ENCODE measurements at regions of chr1 and their contacts with region 1.

Region 1: GRCh38 chr1:108559215-108560186 is at the start of gene EEIG2:
- DNase-seq: peak; percentile 59
- H3K4me3 ChIP-seq: peak within 1 kb of the TSS; percentile 77
- H3K27ac ChIP-seq: no peak within 1 kb of the TSS
- H3K27me3 ChIP-seq: peaks cover 2% of the 10 kb centered on the region
- CTCF ChIP-seq: peak; percentile 55
- polyA plus RNA-seq, gene EEIG2: 4.4 and 6.1 TPM in 2 replicates

Region 2: GRCh38 chr1:107795994-107796393 is 763.5 kb before region 1 on chr1:
- CTCF ChIA-PET with region 1: no interaction called
- POLR2A ChIA-PET with region 1: no interaction called
- DNase-seq: no peak
- H3K4me3 ChIP-seq: no peak overlapping the region
- H3K27ac ChIP-seq: no peak overlapping the region
- H3K27me3 ChIP-seq: no peaks in the 10 kb centered on the region
- CTCF ChIP-seq: no peak

Region 3: GRCh38 chr1:108512239-108512981 is 47.1 kb before region 1 on chr1:
- CTCF ChIA-PET with region 1: interaction called, 23 read pairs
- POLR2A ChIA-PET with region 1: no interaction called
- DNase-seq: peak; percentile 7
- H3K4me3 ChIP-seq: no peak overlapping the region
- H3K27ac ChIP-seq: no peak overlapping the region
- H3K27me3 ChIP-seq: no peaks in the 10 kb centered on the region
- CTCF ChIP-seq: peak; percentile 89

Region 4: GRCh38 chr1:108570128-108570527 is 10.6 kb after region 1 on chr1:
- CTCF ChIA-PET with region 1: interaction called, 25 read pairs
- POLR2A ChIA-PET with region 1: no interaction called
- DNase-seq: no peak
- H3K4me3 ChIP-seq: no peak overlapping the region
- H3K27ac ChIP-seq: no peak overlapping the region
- H3K27me3 ChIP-seq: no peaks in the 10 kb centered on the region
- CTCF ChIP-seq: peak; percentile 31

Region 5: GRCh38 chr1:108584348-108584856 is 24.9 kb after region 1 on chr1:
- CTCF ChIA-PET with region 1: interaction called, 26 read pairs
- POLR2A ChIA-PET with region 1: interaction called, 6 read pairs
- DNase-seq: no peak
- H3K4me3 ChIP-seq: no peak overlapping the region
- H3K27ac ChIP-seq: no peak overlapping the region
- H3K27me3 ChIP-seq: no peaks in the 10 kb centered on the region
- CTCF ChIP-seq: no peak

Region 6: DNA sequence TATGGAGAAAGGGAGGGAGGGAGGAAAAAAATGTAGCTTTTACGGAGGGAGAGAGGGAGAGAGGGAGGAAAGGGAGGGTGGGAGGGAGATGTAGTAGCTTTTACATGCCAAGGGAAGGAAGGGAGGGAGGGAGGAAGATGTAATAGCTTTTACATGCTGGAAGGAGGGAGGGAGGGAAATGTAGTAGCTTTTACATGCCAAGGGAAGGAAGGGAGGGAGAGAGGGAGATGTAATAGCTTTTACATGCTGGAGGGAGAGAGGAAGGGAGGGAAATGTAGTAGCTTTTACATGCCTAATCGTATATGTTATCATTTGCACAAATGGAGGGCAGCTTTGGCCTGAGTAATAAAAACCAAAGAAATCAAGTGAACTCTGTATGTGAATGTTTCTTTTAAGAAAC is 36.0 kb after region 1 on chr1:
- CTCF ChIA-PET with region 1: interaction called, 10 read pairs
- POLR2A ChIA-PET with region 1: interaction called, 3 read pairs
- DNase-seq: no peak
- H3K4me3 ChIP-seq: no peak overlapping the region
- H3K27ac ChIP-seq: no peak overlapping the region
- H3K27me3 ChIP-seq: no peaks in the 10 kb centered on the region
- CTCF ChIP-seq: no peak

Region 7: DNA sequence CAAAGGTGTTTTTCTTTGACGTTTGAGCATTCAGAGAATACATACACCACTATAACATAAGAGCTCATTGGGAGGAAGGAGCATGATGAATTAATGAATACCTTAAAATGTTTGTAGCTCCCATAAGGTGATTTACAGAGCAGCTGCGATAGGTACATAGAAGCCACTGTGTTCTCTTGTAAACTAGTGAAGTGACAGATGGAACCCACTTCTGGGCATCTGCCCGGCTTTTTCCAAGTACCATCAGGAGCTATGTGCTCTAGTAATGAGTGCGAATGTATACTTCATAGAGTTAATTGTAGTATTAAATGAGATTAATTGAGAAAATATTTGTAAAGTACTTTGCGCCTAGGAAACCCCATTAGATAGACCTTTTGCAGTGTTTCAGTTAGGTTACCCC is 53.0 kb after region 1 on chr1:
- CTCF ChIA-PET with region 1: interaction called, 12 read pairs
- POLR2A ChIA-PET with region 1: no interaction called
- DNase-seq: no peak
- H3K4me3 ChIP-seq: no peak overlapping the region
- H3K27ac ChIP-seq: no peak overlapping the region
- H3K27me3 ChIP-seq: no peaks in the 10 kb centered on the region
- CTCF ChIP-seq: no peak

Region 8: GRCh38 chr1:108643492-108644335 is 84.2 kb after region 1 on chr1:
- CTCF ChIA-PET with region 1: interaction called, 60 read pairs
- POLR2A ChIA-PET with region 1: no interaction called
- DNase-seq: peak; percentile 62
- H3K4me3 ChIP-seq: no peak overlapping the region
- H3K27ac ChIP-seq: no peak overlapping the region
- H3K27me3 ChIP-seq: no peaks in the 10 kb centered on the region
- CTCF ChIP-seq: peak; percentile 63